Activated B cell treated with CpG ODN at 0.5 μM for 24 hours (primary cell): ENCODE measurements at regions of chr17 and their contacts with region 1.

Region 1: GRCh38 chr17:29180034-29180787 is at the start of gene MYO18A:
- DNase-seq: peak; percentile 80
- ATAC-seq: peak; percentile 98
- H3K4me3 Mint-ChIP-seq: peak within 1 kb of the TSS; percentile 57
- H3K27ac Mint-ChIP-seq: no peak within 1 kb of the TSS
- H3K4me1 Mint-ChIP-seq: peaks cover 13% of the 10 kb centered on the region
- H3K27me3 Mint-ChIP-seq: peaks cover 9% of the 10 kb centered on the region
- CTCF ChIP-seq: no peak
- total RNA-seq, gene MYO18A: 67.8 and 79.8 TPM in 2 replicates

Region 2: DNA sequence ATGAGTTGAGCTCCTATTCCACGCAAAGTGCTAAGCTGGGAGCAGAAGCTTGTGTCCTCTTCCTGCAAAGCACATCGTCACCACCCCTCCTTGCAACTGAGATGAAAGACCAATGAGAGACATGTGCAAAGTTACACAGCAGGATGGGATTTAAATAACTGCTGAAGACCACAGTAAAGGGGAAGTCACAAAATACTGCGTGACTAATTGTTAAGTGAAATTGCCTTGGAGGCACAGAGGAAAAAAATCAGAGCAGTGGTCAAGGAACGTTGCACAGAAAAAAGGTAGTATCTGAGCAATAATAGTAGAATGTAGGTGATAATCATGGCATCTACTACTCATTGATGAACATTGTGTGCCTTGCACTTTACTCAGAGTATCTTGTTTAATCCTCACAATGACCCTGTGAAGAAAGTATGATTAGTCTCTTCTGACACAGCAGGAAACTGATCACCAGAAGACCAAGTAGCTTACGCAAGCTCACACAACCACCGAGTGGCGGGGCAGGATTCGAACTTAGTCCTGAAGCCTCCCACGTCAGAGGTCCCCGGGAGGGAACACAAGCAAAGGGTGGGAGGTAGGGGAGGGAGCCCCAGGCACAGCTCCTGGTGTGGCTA is 15.4 kb after region 1 on chr17:
- CTCF ChIA-PET with region 1: interaction called, 8 read pairs
- POLR2A ChIA-PET with region 1: interaction called, 3 read pairs
- intact Hi-C with region 1: loop called (anchors 1 kb)
- DNase-seq: no peak
- ATAC-seq: peak; percentile 89
- H3K4me3 Mint-ChIP-seq: peak overlapping the region; percentile 71
- H3K27ac Mint-ChIP-seq: peak overlapping the region; percentile 67
- H3K4me1 Mint-ChIP-seq: peaks cover 25% of the 10 kb centered on the region
- H3K27me3 Mint-ChIP-seq: no peaks in the 10 kb centered on the region
- CTCF ChIP-seq: no peak

Region 3: DNA sequence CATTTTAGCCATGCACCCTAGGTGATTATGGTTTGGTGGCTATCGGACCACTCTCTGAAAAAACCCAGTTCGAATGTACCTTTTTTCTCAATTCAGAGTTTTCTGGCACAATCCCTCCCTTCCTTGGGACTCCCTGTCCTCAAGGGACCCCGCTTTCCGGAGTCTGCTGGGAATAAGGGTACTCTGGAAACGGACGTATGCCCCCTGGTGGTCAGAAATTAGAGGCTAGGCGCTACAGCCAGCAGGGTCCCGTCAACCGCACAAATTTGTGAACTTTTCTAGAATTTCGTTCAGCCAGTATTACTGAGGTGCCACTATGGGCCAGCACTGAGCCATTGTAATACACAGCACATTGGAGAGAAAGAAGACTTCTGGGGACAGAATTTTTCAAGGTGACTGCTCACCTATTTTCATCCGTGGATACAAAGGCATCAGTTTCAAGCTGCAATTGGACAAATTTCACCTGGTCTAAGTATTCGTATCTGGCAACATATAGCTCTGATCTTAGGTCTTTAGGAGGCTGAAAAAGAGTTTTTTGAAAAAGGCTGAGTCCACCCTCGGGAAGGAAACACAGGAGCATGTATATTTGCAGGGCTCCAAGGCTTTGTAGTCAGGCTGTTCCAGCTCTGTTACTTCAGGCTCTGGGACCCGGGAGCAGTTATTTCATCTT is 39.3 kb after region 1 on chr17:
- CTCF ChIA-PET with region 1: interaction called, 13 read pairs
- POLR2A ChIA-PET with region 1: interaction called, 5 read pairs
- intact Hi-C with region 1: loop called (anchors 2 kb)
- DNase-seq: peak; percentile 52
- ATAC-seq: peak; percentile 88
- H3K4me3 Mint-ChIP-seq: no peak overlapping the region
- H3K27ac Mint-ChIP-seq: no peak overlapping the region
- H3K4me1 Mint-ChIP-seq: peaks cover 8% of the 10 kb centered on the region
- H3K27me3 Mint-ChIP-seq: peaks cover 2% of the 10 kb centered on the region
- CTCF ChIP-seq: peak; percentile 20